Heart left ventricle (tissue), 16 donors: ENCODE measurements at regions of chr6 and their contacts with region 1.

Region 1: DNA sequence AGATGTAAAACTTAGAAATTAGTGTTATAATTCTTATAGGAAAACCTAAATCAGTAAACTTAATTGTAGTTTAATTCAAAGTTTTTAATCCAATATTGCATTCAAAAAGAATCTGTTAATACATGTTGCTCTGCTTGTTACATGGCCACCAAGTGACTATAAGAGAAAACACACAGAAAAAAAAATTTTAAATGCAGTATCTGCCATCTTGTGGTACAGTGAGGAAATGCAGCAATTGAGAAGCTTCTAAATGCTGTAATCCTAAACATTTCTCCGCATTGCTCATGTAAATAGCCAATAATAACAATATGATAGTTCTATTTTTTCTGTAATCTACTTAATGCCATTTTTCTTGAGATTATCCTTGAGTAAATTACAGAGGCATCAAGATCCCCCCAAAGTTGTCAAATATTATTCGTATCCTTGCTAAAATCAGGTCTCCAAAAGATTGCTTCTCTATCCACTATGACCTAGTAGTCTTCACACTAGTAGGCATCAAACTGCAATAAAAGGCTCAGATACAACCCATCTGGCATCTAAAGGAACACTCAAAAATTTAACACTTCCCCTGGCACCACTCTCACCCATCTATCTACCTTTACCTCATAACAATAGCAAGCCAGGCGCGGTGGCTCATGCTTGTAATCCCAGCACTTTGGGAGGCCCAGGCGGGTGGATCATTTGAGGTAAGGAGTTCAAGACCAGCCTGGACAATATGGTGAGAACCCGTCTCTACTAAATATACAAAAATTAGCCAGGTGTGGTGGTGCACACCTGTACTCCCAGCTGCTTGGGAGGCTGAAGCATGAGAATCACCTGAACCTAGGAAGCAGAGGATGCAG is 34.6 kb downstream of the HDAC2 start:
- DNase-seq: no peak
- ATAC-seq: peak in 1 of 4 donors; percentile 64
- H3K4me3 ChIP-seq: no peak overlapping the region
- H3K27ac ChIP-seq: no peak overlapping the region
- H3K4me1 ChIP-seq: peaks cover 0 to 6% (median 0%) of the 10 kb centered on the region in 12 donors
- H3K27me3 ChIP-seq: no peaks in the 10 kb centered on the region
- CTCF ChIP-seq: peak; percentile 60 to 87 (median 78)
- POLR2A ChIP-seq: no peak

Region 2: GRCh38 chr6:112337209-112337638 is 1599.1 kb before region 1 on chr6:
- intact Hi-C with region 1: loop called in 2 of 10 experiments (anchors 10 kb)
- DNase-seq: peak in 4 of 5 donors; percentile 50 to 62 (median 55)
- ATAC-seq: peak; percentile 78 to 94 (median 92)
- H3K4me3 ChIP-seq: no peak overlapping the region
- H3K27ac ChIP-seq: no peak overlapping the region
- H3K4me1 ChIP-seq: no peaks in the 10 kb centered on the region
- H3K27me3 ChIP-seq: peaks cover 0 to 4% (median 0%) of the 10 kb centered on the region in 9 donors
- CTCF ChIP-seq: peak; percentile 36 to 77 (median 62)
- POLR2A ChIP-seq: no peak

Region 3: DNA sequence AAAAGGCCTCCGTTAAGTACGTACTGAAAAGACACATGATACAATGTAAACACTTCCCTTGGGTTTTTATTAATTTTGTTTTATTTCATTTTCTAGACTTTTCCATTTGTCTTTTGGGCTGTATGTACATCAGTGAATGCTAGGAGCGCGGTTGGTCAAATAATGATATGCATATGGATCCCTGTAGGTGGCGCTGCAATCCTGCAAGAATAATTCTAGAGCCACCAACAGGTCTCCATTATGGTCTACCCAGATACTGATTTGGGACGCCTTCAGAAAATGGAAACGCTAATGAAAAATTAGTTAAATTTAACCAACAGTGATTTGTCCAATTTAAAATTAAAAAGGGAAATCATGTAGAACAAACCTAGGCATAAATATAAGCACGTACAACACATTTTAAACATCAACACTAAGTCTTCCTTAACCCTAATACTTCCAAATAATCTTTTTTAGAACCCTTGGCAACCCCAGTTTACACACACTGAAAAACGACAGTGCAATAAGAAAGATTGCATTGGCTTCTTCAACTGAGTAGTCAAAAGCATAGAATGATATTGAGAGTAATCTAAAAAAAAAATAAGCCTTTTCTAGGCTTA is 1155.7 kb before region 1 on chr6:
- intact Hi-C with region 1: loop called in 2 of 10 experiments (anchors 10 kb)
- DNase-seq: peak; percentile 52 to 79 (median 66)
- ATAC-seq: peak in 3 of 4 donors; percentile 86 to 93 (median 91)
- H3K4me3 ChIP-seq: no peak overlapping the region
- H3K27ac ChIP-seq: no peak overlapping the region
- H3K4me1 ChIP-seq: peaks cover 0 to 4% (median 0%) of the 10 kb centered on the region in 12 donors
- H3K27me3 ChIP-seq: no peaks in the 10 kb centered on the region
- CTCF ChIP-seq: peak; percentile 74 to 94 (median 84)
- POLR2A ChIP-seq: no peak

Region 4: GRCh38 chr6:113842153-113842552 is 94.2 kb before region 1 on chr6:
- intact Hi-C with region 1: no loop called
- DNase-seq: no peak
- ATAC-seq: no peak
- H3K4me3 ChIP-seq: no peak overlapping the region
- H3K27ac ChIP-seq: no peak overlapping the region
- H3K4me1 ChIP-seq: no peaks in the 10 kb centered on the region
- H3K27me3 ChIP-seq: no peaks in the 10 kb centered on the region
- CTCF ChIP-seq: no peak
- POLR2A ChIP-seq: no peak

Region 5: GRCh38 chr6:113994918-113995342 is 58.6 kb after region 1 on chr6:
- intact Hi-C with region 1: no loop called
- DNase-seq: peak in 2 of 5 donors; percentile 26
- ATAC-seq: peak; percentile 53 to 84 (median 79)
- H3K4me3 ChIP-seq: no peak overlapping the region
- H3K27ac ChIP-seq: peak overlapping the region in 4 of 12 donors; percentile 1 to 22 (median 19)
- H3K4me1 ChIP-seq: peaks cover 0 to 32% (median 18%) of the 10 kb centered on the region in 12 donors
- H3K27me3 ChIP-seq: no peaks in the 10 kb centered on the region
- CTCF ChIP-seq: peak; percentile 24 to 61 (median 44)
- POLR2A ChIP-seq: no peak